HepG2 (cell line): ENCODE measurements at regions of chr9 and their contacts with region 1.

Region 1: DNA sequence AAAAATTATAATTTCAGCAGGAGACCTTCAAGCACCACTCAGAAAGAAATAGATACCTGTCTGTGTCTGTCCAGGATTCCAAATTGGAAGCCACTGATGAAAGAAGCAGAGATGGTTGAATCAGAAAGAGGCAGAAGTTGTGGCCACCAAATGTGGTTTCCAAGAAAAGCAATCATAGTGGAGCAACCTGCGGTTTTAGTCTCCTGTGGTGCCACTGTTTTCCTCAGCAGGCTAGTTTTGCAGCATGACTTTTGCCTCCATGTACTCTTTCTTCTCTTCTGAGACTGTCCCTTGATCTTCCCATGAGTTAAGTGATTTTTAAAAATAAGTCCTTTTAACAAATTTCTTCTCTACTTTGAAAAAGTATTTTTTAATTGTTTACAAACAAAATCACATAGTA is 535.8 kb downstream of the CYLC2 start:
- DNase-seq: no peak
- ATAC-seq: no peak
- H3K4me3 ChIP-seq: no peak overlapping the region
- H3K27ac ChIP-seq: no peak overlapping the region
- H3K4me1 ChIP-seq: no peaks in the 10 kb centered on the region
- H3K27me3 ChIP-seq: no peaks in the 10 kb centered on the region
- CTCF ChIP-seq: no peak
- EP300 ChIP-seq: no peak
- POLR2A ChIP-seq: no peak
- RAD21 ChIP-seq: no peak

Region 2: GRCh38 chr9:103183701-103184171 is 347.2 kb before region 1 on chr9:
- CTCF ChIA-PET with region 1: no interaction called
- POLR2A ChIA-PET with region 1: no interaction called
- in situ Hi-C with region 1: no loop called
- intact Hi-C with region 1: no loop called
- DNase-seq: peak; percentile 9
- ATAC-seq: peak; percentile 59
- H3K4me3 ChIP-seq: no peak overlapping the region
- H3K27ac ChIP-seq: no peak overlapping the region
- H3K4me1 ChIP-seq: no peaks in the 10 kb centered on the region
- H3K27me3 ChIP-seq: no peaks in the 10 kb centered on the region
- CTCF ChIP-seq: no peak
- EP300 ChIP-seq: no peak
- POLR2A ChIP-seq: no peak
- RAD21 ChIP-seq: no peak

Region 3: DNA sequence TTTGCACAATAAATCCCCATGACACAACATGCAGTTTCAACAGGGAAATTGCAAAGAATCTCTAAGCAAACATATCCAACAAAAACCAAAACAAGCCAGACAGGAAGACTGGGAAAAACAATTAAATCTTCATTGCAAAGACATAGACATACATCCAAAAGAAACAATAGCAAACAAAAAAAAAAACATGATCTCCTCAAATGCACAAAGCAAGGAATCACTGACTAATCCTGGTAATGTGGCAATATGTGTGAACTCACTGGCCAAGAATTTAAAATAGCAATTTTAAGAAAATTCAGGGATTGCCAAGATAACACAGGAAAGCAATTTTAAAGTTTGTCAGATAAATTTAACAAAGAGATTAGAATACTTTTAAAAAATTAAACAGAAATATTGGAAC is 43.1 kb after region 1 on chr9:
- CTCF ChIA-PET with region 1: no interaction called
- POLR2A ChIA-PET with region 1: no interaction called
- in situ Hi-C with region 1: no loop called
- intact Hi-C with region 1: no loop called
- DNase-seq: no peak
- ATAC-seq: no peak
- H3K4me3 ChIP-seq: no peak overlapping the region
- H3K27ac ChIP-seq: no peak overlapping the region
- H3K4me1 ChIP-seq: no peaks in the 10 kb centered on the region
- H3K27me3 ChIP-seq: no peaks in the 10 kb centered on the region
- CTCF ChIP-seq: no peak
- EP300 ChIP-seq: no peak
- POLR2A ChIP-seq: no peak
- RAD21 ChIP-seq: no peak

Region 4: DNA sequence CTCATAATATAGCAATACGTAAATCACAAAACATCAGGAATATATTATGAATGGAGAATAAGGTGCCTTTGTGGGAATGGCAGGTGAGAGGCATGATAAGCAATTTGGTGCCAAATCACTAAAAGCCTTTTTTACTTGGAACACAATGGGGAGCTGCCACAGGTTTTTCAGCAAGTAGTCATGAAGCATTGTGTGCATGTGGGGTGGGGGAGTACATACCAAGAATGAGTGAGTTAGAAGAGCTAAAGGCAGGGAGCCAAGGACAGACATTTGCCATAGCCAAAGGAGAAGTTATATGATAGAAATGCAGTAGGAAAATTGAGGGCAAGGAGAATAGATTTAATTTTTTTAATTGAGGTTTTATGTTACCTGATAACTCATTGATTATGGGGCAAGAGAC is 118.2 kb after region 1 on chr9:
- CTCF ChIA-PET with region 1: no interaction called
- POLR2A ChIA-PET with region 1: no interaction called
- in situ Hi-C with region 1: loop called (anchors 25 kb)
- intact Hi-C with region 1: no loop called
- DNase-seq: no peak
- ATAC-seq: no peak
- H3K4me3 ChIP-seq: no peak overlapping the region
- H3K27ac ChIP-seq: no peak overlapping the region
- H3K4me1 ChIP-seq: no peaks in the 10 kb centered on the region
- H3K27me3 ChIP-seq: no peaks in the 10 kb centered on the region
- CTCF ChIP-seq: no peak
- EP300 ChIP-seq: no peak
- POLR2A ChIP-seq: no peak
- RAD21 ChIP-seq: no peak